HepG2 (cell line): ENCODE measurements at regions of chr1 and their contacts with region 1.

Region 1: GRCh38 chr1:114695430-114696058 is at the start of gene AMPD1:
- DNase-seq: no peak
- ATAC-seq: no peak
- H3K4me3 ChIP-seq: no peak within 1 kb of the TSS
- H3K27ac ChIP-seq: no peak within 1 kb of the TSS
- H3K4me1 ChIP-seq: no peaks in the 10 kb centered on the region
- H3K27me3 ChIP-seq: no peaks in the 10 kb centered on the region
- CTCF ChIP-seq: no peak
- EP300 ChIP-seq: no peak
- POLR2A ChIP-seq: no peak
- RAD21 ChIP-seq: no peak
- total RNA-seq, gene AMPD1: not detected in 2 replicates

Region 2: GRCh38 chr1:114353262-114353661 is 342.3 kb before region 1 on chr1:
- CTCF ChIA-PET with region 1: no interaction called
- POLR2A ChIA-PET with region 1: no interaction called
- in situ Hi-C with region 1: loop called (anchors 25 kb)
- intact Hi-C with region 1: no loop called
- DNase-seq: peak; percentile 10
- ATAC-seq: peak; percentile 56; the same call in 2 of the 3 replicates
- H3K4me3 ChIP-seq: no peak overlapping the region
- H3K27ac ChIP-seq: no peak overlapping the region
- H3K4me1 ChIP-seq: 0 out of 2 replicates have a peak, but pooled peaks cover 13% of the 10 kb centered on the region
- H3K27me3 ChIP-seq: peaks cover 3 to 41% of the 10 kb centered on the region in 2 experiments; a peak in 4 of 5 replicates
- CTCF ChIP-seq: no peak
- EP300 ChIP-seq: no peak
- POLR2A ChIP-seq: no peak
- RAD21 ChIP-seq: no peak

Region 3: DNA sequence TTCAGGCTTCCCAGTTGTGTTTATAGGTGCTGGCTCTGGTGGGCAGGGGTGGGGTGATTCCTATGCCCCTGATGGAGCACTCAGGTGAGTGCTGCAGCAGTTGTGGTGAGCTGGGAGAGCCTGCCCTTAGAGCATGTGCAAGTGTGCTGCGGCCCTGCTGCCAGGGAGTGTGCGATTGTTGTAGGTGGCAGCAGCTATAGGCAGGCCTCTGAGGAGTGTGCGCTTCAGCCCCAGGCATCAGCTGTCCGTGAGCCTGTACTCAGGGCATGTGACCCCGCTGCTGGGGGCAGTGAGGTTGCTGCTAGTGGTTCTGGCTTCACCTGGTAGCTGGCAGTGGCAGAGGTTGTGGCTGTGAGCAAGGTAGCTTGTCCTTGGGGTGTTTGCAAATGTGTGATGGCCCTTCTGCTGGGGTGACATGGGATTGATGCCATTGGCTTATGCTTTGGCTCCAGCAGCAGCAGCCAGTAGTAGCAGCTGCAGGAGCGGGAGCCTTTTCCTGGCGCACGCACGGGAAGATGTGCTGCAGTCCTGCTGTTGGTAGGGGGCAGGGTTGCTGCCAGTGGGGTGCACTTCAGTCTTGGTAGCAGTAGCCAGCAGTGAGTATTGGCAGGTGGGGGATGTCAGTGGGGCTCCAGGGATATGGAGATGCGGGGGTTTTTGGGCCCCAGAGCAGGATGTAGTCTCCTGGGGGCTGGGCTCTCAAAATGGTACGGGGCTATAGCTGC is 196.8 kb after region 1 on chr1:
- CTCF ChIA-PET with region 1: no interaction called
- POLR2A ChIA-PET with region 1: no interaction called
- in situ Hi-C with region 1: no loop called
- intact Hi-C with region 1: no loop called
- DNase-seq: no peak
- ATAC-seq: no peak
- H3K4me3 ChIP-seq: no peak overlapping the region
- H3K27ac ChIP-seq: no peak overlapping the region
- H3K4me1 ChIP-seq: no peaks in the 10 kb centered on the region
- H3K27me3 ChIP-seq: no peaks in the 10 kb centered on the region; a peak in 1 of 5 replicates
- CTCF ChIP-seq: no peak
- EP300 ChIP-seq: no peak
- POLR2A ChIP-seq: no peak
- RAD21 ChIP-seq: no peak